ENCODE measurements at regions of chr5 and their contacts with region 1.

Region 1: GRCh38 chr5:178075840-178076548 is 37.3 kb upstream of the N4BP3 start:
- DNase-seq: peak; percentile 88
- H3K27ac ChIP-seq: no peak overlapping the region
- CTCF ChIP-seq: peak; percentile 97

Region 2: GRCh38 chr5:178090858-178091540 is 15.0 kb after region 1 on chr5:
- CTCF ChIA-PET with region 1: interaction called, 19 read pairs
- POLR2A ChIA-PET with region 1: no interaction called
- DNase-seq: no peak
- H3K27ac ChIP-seq: no peak overlapping the region
- CTCF ChIP-seq: no peak

Region 3: GRCh38 chr5:178120868-178121357 is 44.9 kb after region 1 on chr5:
- CTCF ChIA-PET with region 1: interaction called, 50 read pairs
- POLR2A ChIA-PET with region 1: interaction called, 5 read pairs
- DNase-seq: peak; percentile 53
- H3K27ac ChIP-seq: no peak overlapping the region
- CTCF ChIP-seq: peak; percentile 53

Region 4: DNA sequence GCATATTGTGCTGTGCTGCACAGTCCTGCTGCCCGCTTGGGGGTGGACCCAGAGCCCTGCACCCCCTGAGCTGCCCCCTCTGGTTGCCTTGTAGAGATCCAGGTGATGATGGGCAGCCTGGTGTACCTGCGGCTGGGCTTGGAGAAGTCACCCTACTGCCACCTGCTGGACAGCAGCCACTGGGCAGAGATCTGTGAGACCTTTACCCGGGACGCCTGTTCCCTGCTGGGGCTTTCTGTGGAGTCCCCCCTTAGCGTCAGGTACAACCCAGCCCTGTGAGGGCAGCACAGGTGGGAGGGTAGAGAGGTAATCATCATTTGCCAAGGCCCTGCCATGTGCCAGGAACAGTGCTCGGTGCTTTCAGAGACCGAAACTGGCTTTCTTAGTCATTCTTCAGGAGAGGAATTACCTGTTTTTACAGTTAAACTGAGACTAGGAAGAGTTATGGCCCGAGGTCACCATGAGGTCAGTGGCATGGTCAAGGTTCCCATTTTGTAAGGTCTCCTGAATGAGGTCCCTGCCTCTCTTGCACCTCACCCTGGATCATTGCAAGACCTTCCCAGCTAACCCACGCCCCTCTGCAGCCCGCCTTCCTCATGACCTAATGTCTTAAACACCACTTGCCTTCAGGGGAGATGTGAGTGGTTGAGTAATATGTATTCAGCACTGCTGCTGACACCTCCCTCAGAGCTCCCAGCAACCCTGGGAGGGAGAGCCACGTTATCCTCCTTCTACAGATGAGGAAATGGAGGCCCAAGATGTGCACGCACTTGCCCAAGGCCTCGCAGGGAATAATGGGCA is 70.2 kb after region 1 on chr5:
- CTCF ChIA-PET with region 1: interaction called, 175 read pairs
- POLR2A ChIA-PET with region 1: interaction called, 5 read pairs
- DNase-seq: peak; percentile 88
- H3K27ac ChIP-seq: peak overlapping the region; percentile 61
- CTCF ChIP-seq: peak; percentile 96

Region 5: GRCh38 chr5:178163772-178164735 is 88.1 kb after region 1 on chr5:
- CTCF ChIA-PET with region 1: interaction called, 46 read pairs
- POLR2A ChIA-PET with region 1: no interaction called
- DNase-seq: peak; percentile 89
- H3K27ac ChIP-seq: no peak overlapping the region
- CTCF ChIP-seq: peak; percentile 99

Region 6: DNA sequence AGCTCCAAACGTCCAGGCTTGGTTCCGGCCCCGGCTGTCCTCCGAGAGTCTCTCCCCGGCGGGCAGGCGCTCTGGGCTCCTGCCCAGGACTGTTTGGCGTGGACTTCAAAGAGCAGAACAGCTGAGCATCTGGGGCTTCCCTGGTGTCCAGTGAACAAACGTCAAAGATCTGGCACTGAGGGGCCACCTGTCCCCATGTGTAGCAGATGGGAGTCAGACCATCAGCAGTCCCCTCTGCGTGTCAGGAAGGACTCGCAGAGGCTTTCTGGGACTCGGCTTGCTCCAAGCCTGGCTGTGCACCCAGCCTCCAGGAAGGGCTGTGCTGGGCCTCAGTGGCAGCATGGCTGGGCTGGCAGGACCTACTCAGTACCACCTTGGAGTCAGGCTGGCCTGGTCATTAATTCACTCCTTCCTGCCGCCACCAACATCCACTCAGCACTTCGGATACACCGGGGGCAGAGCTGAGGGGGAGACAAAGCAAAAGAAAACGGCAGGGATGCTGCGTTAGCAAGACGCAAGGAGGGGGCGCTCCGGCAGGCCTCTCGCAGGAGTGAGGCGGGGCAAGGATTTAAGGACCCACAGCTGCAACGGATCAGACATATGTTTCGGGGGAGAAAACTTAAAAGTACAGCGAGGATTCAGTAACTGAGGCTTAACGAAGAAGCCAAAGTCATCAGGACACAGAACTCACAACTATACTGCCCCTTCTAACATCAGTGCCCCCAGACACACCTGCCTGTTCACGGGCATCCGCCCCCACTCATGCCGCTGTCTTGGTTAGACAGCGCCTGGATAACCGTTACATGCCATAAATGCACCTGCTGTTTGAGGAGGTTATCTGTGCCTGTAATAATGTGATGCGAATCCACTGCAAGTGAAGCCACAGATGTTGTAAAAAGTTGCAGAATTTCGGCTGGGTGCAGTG is 321.1 kb after region 1 on chr5:
- CTCF ChIA-PET with region 1: no interaction called
- POLR2A ChIA-PET with region 1: no interaction called
- DNase-seq: no peak
- H3K27ac ChIP-seq: no peak overlapping the region
- CTCF ChIP-seq: no peak

Region 7: GRCh38 chr5:178677429-178677828 is 601.4 kb after region 1 on chr5:
- CTCF ChIA-PET with region 1: no interaction called
- POLR2A ChIA-PET with region 1: no interaction called
- DNase-seq: no peak
- H3K27ac ChIP-seq: no peak overlapping the region
- CTCF ChIP-seq: no peak